ENCODE measurements at regions of chr17 and their contacts with region 1.

Region 1: GRCh38 chr17:48724251-48725003 is 1.4 kb downstream of the PRAC2 start:
- DNase-seq: peak; percentile 71 to 83
- ATAC-seq: peak; percentile 66 to 79 (median 69)
- H3K4me3 ChIP-seq: no peak overlapping the region
- H3K4me3 Mint-ChIP-seq: peak overlapping the region; percentile 83
- H3K27ac ChIP-seq: no peak overlapping the region
- H3K27ac Mint-ChIP-seq: peak overlapping the region; percentile 35 to 70
- H3K4me1 ChIP-seq: peaks cover 52% of the 10 kb centered on the region
- H3K4me1 Mint-ChIP-seq: peaks cover 27 to 56% of the 10 kb centered on the region in 2 donors
- H3K27me3 ChIP-seq: peaks cover 96% of the 10 kb centered on the region
- H3K27me3 Mint-ChIP-seq: peaks cover 85 to 87% of the 10 kb centered on the region in 2 donors
- CTCF ChIP-seq: peak; percentile 74

Region 2: GRCh38 chr17:47742319-47743181 is 981.9 kb before region 1 on chr17:
- intact Hi-C with region 1: loop called (anchors 10 kb)
- DNase-seq: peak in 1 of 2 donors; percentile 73
- ATAC-seq: peak; percentile 5 to 30 (median 29)
- H3K4me3 ChIP-seq: peak overlapping the region; percentile 22
- H3K4me3 Mint-ChIP-seq: peak overlapping the region; percentile 99
- H3K27ac ChIP-seq: peak overlapping the region; percentile 75
- H3K27ac Mint-ChIP-seq: peak overlapping the region; percentile 85 to 94
- H3K4me1 ChIP-seq: peaks cover 88% of the 10 kb centered on the region
- H3K4me1 Mint-ChIP-seq: peaks cover 69 to 79% of the 10 kb centered on the region in 2 donors
- H3K27me3 ChIP-seq: no peaks in the 10 kb centered on the region
- H3K27me3 Mint-ChIP-seq: no peaks in the 10 kb centered on the region
- CTCF ChIP-seq: peak; percentile 48

Region 3: DNA sequence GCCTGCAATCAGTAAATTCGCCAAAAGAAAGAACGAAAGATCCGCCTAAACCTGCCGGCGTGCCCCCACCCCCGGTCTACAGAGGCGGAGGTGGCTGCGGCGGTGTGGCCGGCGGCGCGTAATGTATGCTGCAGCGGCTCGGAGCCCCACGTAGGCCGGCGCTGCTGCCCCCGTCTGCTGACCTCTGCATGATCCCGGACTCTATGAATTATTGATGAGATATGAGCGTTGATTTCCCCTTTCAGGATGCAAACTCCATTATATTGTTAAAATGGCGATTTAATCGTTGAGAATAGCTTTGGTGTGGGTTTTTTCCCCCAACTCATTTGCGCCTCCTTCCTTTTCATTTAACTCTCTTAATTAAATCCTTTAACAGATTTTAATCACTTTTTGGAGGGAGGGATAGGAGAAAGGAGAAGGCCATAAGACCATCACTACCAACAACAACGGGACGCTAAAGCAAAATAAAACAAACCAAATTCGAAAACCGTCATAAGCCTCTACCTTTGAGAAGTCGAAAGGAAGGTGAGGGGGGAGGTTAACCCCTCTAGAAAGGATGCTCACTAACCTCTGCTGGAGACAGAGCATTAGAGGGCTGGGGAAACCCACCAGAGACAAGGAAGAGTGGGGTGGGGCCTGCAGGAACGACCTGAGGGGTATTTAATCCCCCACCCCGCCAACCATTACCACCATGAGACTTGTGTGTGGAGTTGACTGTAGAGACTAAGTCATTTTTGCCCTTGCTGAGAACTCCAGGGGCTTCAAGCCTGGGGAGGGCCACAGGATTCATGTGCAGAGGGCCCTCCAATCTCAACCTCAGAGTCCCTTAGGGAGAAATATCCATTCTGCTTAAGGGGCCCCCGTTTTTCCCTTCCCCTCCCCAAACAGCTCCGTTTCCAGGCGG is 137.8 kb before region 1 on chr17:
- intact Hi-C with region 1: no loop called
- DNase-seq: peak; percentile 56 to 60
- ATAC-seq: peak in 2 of 3 donors; percentile 47
- H3K4me3 ChIP-seq: peak overlapping the region; percentile 52
- H3K4me3 Mint-ChIP-seq: peak overlapping the region; percentile 97
- H3K27ac ChIP-seq: no peak overlapping the region
- H3K27ac Mint-ChIP-seq: peak overlapping the region; percentile 83 to 92
- H3K4me1 ChIP-seq: peaks cover 27% of the 10 kb centered on the region
- H3K4me1 Mint-ChIP-seq: peaks cover 29 to 44% of the 10 kb centered on the region in 2 donors
- H3K27me3 ChIP-seq: peaks cover 47% of the 10 kb centered on the region
- H3K27me3 Mint-ChIP-seq: peaks cover 71 to 80% of the 10 kb centered on the region in 2 donors
- CTCF ChIP-seq: no peak

Region 4: DNA sequence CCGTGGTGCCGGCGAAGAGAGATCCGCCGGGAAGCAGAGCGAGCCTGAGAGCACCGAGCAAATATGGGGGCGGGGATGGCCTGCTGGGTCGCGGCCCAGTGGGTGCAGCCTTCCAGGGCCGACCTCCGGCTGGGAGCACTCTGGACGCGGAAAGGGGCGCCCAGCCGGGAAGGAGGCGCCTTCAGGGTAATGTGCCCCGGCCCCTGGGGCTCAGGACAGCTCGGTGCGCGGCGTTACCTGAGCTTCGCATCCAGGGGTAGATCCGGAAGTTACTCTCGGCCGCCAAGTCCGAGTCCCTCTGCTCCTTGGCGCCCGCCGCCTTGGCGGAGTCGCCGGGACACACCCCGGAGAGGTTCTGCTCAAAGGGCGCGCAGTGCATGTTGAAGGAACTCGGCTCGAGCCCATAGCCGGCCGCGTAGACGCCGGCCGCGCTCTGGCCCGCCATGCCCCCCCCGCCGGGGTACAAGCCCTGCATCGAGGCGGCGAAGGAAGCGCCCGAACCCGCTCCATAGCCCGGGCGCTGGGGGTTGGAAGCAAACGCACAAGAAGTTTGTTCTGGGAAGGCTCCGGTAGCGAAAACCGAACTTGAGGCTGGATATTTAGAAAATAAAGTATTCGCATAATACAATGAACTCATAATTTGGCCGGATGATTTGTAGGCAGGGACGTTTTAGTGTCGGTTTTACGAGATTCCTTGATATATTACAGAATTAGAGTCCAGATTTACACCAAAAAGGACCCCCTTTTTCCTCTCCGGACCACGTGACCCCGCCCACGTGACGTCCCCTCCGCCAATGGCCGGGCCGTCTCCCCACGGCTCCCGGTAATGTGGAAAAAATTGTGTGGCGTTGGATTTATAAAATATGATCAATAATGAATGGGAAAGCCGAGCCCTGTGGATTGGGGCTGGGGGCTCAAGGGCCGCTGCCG is 113.9 kb before region 1 on chr17 and contains the start of gene HOXB7:
- intact Hi-C with region 1: loop called (anchors 5 kb)
- DNase-seq: peak; percentile 68 to 75
- ATAC-seq: peak; percentile 28 to 59 (median 39)
- H3K4me3 ChIP-seq: peak within 1 kb of the TSS; percentile 85
- H3K4me3 Mint-ChIP-seq: peak within 1 kb of the TSS; percentile 98
- H3K27ac ChIP-seq: peak within 1 kb of the TSS; percentile 31
- H3K27ac Mint-ChIP-seq: peak within 1 kb of the TSS; percentile 43 to 78
- H3K4me1 ChIP-seq: peaks cover 53% of the 10 kb centered on the region
- H3K4me1 Mint-ChIP-seq: peaks cover 43 to 48% of the 10 kb centered on the region in 2 donors
- H3K27me3 ChIP-seq: peaks cover 39% of the 10 kb centered on the region
- H3K27me3 Mint-ChIP-seq: peaks cover 30 to 48% of the 10 kb centered on the region in 2 donors
- CTCF ChIP-seq: no peak
- total RNA-seq, gene HOXB7: 0.45 to 1.4 (median 0.97) TPM

Region 5: GRCh38 chr17:48756830-48757251 is 32.4 kb after region 1 on chr17:
- intact Hi-C with region 1: loop called (anchors 5 kb)
- DNase-seq: no peak
- ATAC-seq: no peak
- H3K4me3 ChIP-seq: no peak overlapping the region
- H3K4me3 Mint-ChIP-seq: no peak overlapping the region
- H3K27ac ChIP-seq: no peak overlapping the region
- H3K27ac Mint-ChIP-seq: no peak overlapping the region
- H3K4me1 ChIP-seq: peaks cover 13% of the 10 kb centered on the region
- H3K4me1 Mint-ChIP-seq: peaks cover 0 to 3% of the 10 kb centered on the region in 2 donors
- H3K27me3 ChIP-seq: peaks cover 42% of the 10 kb centered on the region
- H3K27me3 Mint-ChIP-seq: peaks cover 55 to 75% of the 10 kb centered on the region in 2 donors
- CTCF ChIP-seq: no peak

Region 6: DNA sequence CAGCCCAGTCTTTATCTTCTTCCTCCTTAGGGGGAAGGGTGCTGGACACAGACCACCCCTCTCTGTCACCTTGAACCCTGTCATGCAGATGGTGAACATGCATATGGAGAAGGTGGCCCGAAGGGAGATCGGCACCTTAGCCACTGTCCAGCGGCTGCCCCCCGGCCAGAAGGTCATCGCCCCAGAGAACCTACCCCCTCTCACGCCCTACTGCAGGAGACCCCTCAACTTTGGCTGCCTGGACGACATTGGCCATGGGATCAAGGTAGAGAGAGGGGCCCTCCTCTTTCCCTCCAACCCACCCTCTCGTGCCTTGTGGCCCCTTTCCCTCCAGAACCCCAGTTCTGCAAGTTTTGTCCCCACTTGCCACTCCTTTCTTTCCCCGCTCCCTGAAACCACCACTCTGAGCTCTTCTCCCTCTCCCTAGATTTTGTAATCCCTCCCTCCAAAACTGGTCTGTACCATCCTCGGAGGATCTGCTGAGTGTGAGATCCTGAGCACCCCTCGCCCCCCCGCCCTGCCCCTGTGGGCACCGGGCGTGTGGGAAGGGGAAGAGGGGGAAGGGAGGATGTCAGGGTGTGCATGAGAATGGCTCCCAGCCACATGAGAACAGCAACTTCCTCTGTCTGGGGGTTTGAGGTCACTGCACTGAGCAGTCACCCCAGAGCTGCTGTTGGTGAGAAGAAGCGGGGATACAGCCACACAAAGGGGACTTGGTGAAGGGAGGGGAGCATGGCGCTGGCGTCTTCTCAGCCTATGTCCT is 493.4 kb after region 1 on chr17:
- intact Hi-C with region 1: loop called (anchors 5 kb)
- DNase-seq: peak; percentile 73 to 93
- ATAC-seq: peak; percentile 58 to 81 (median 75)
- H3K4me3 ChIP-seq: peak overlapping the region; percentile 6
- H3K4me3 Mint-ChIP-seq: peak overlapping the region; percentile 89
- H3K27ac ChIP-seq: peak overlapping the region; percentile 97
- H3K27ac Mint-ChIP-seq: peak overlapping the region; percentile 81 to 98
- H3K4me1 ChIP-seq: peaks cover 98% of the 10 kb centered on the region
- H3K4me1 Mint-ChIP-seq: peaks cover 63 to 83% of the 10 kb centered on the region in 2 donors
- H3K27me3 ChIP-seq: no peaks in the 10 kb centered on the region
- H3K27me3 Mint-ChIP-seq: no peaks in the 10 kb centered on the region
- CTCF ChIP-seq: no peak